ENCODE measurements at regions of chr6 and their contacts with region 1.

Region 1: GRCh38 chr6:42771741-42772100 is 10.1 kb upstream of the BICRAL start:
- DNase-seq: no peak
- ATAC-seq: no peak
- H3K4me3 Mint-ChIP-seq: peak overlapping the region; percentile 66
- H3K27ac Mint-ChIP-seq: peak overlapping the region; percentile 77
- H3K4me1 Mint-ChIP-seq: peaks cover 29% of the 10 kb centered on the region
- H3K27me3 Mint-ChIP-seq: no peaks in the 10 kb centered on the region
- CTCF ChIP-seq: no peak

Region 2: DNA sequence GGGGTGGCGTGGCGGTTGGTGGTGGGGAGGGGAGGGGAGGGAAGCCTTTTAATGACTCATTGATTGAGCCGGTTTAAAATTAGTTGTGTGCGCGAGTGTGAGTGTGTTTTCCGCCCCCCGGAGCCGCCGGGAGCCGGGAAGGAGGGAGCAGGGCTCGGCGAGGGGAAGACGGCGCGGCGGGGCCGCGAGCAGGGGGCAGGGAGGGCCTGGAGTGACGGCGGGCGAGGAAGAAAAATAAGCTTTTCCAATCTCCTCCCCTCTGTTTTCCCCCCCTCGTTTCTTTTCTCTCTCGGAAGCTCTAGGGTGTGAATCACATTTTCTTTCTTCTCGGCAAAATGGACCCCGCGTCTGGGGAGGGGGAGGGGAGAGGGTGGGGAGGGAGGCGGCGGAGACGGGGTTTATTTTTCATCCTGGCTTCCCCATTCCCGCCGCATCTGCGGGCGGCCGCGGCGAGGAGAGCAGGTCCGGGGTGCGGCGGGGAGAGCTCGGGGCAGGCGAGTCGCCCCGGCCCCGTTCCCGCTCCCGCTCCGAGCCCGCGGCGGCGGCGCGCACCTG is 11.0 kb after region 1 on chr6:
- CTCF ChIA-PET with region 1: interaction called, 4 read pairs
- POLR2A ChIA-PET with region 1: interaction called, 10 read pairs
- DNase-seq: peak; percentile 61
- ATAC-seq: peak; percentile 54
- H3K4me3 Mint-ChIP-seq: peak overlapping the region; percentile 85
- H3K27ac Mint-ChIP-seq: peak overlapping the region; percentile 99
- H3K4me1 Mint-ChIP-seq: peaks cover 22% of the 10 kb centered on the region
- H3K27me3 Mint-ChIP-seq: no peaks in the 10 kb centered on the region
- CTCF ChIP-seq: no peak

Measured in WTC11 (cell line).